ENCODE measurements at regions of chr19 and their contacts with region 1.

Region 1: GRCh38 chr19:44752816-44753618 is 4.5 kb downstream of the BCL3 start:
- DNase-seq: peak; percentile 99
- H3K4me3 Mint-ChIP-seq: peak overlapping the region; percentile 93
- H3K27ac Mint-ChIP-seq: peak overlapping the region; percentile 99
- H3K4me1 Mint-ChIP-seq: peaks cover 52% of the 10 kb centered on the region
- H3K27me3 Mint-ChIP-seq: no peaks in the 10 kb centered on the region

Region 2: DNA sequence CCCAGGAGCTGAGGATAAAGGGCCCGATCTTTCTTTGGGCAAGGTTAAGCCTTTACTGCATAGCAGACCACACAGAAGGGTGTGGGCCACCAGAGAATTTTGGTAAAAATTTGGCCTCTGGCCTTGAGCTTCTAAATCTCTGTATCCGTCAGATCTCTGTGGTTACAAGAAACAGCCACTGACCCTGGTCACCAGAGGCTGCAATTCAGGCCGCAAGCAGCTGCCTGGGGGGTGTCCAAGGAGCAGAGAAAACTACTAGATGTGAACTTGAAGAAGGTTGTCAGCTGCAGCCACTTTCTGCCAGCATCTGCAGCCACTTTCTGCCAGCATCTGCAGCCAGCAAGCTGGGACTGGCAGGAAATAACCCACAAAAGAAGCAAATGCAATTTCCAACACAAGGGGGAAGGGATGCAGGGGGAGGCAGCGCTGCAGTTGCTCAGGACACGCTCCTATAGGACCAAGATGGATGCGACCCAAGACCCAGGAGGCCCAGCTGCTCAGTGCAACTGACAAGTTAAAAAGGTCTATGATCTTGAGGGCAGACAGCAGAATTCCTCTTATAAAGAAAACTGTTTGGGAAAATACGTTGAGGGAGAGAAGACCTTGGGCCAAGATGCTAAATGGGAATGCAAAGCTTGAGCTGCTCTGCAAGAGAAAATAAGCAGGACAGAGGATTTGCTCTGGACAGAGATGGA is 90.2 kb before region 1 on chr19:
- CTCF ChIA-PET with region 1: no interaction called
- POLR2A ChIA-PET with region 1: no interaction called
- intact Hi-C with region 1: no loop called
- DNase-seq: no peak
- H3K4me3 Mint-ChIP-seq: no peak overlapping the region
- H3K27ac Mint-ChIP-seq: no peak overlapping the region
- H3K4me1 Mint-ChIP-seq: no peaks in the 10 kb centered on the region
- H3K27me3 Mint-ChIP-seq: no peaks in the 10 kb centered on the region

Region 3: GRCh38 chr19:44689056-44689895 is 63.7 kb before region 1 on chr19:
- CTCF ChIA-PET with region 1: interaction called, 5 read pairs
- POLR2A ChIA-PET with region 1: no interaction called
- intact Hi-C with region 1: loop called (anchors 2 kb)
- DNase-seq: peak; percentile 81
- H3K4me3 Mint-ChIP-seq: no peak overlapping the region
- H3K27ac Mint-ChIP-seq: no peak overlapping the region
- H3K4me1 Mint-ChIP-seq: peaks cover 32% of the 10 kb centered on the region
- H3K27me3 Mint-ChIP-seq: peaks cover 10% of the 10 kb centered on the region

Region 4: DNA sequence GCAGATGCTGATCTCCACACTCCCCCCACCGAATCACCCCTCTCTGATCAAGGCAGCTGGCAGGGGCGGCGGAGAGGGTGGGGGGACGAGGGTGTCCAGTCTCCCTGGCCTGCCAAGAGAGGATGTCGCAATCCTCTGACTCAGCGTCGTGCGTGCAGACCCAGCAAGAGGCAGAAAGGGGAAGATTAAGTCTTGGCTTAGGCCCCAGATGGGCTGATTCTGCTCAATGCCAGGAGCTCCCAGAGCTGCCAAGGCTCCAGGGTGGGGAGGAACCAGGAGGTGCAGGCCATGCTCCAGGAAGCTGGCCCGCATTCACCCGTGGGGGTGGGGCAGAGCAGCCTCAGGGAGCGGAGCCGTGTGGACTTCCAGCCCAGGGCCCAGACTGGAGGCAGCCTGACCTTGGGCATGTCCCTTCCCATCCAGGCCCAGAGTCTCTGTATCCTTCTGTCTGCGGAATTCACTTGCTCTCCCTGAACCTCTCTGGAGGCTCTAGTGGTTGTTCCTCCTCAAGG is 11.1 kb before region 1 on chr19:
- CTCF ChIA-PET with region 1: no interaction called
- POLR2A ChIA-PET with region 1: interaction called, 17 read pairs
- intact Hi-C with region 1: no loop called
- DNase-seq: peak; percentile 63
- H3K4me3 Mint-ChIP-seq: no peak overlapping the region
- H3K27ac Mint-ChIP-seq: peak overlapping the region; percentile 76
- H3K4me1 Mint-ChIP-seq: peaks cover 28% of the 10 kb centered on the region
- H3K27me3 Mint-ChIP-seq: no peaks in the 10 kb centered on the region

Measured in activated CD4-positive, alpha-beta memory T cell treated with anti-CD3 and anti-CD28 coated beads for 36 hours (primary cell).